Activated naive CD4-positive, alpha-beta T cell treated with anti-CD3 and anti-CD28 coated beads, Interleukin-2, amount 10 ng/mL, durations not matched to agents 7 days and 5 days (primary cell): ENCODE measurements at regions of chr9 and their contacts with region 1.

Region 1: DNA sequence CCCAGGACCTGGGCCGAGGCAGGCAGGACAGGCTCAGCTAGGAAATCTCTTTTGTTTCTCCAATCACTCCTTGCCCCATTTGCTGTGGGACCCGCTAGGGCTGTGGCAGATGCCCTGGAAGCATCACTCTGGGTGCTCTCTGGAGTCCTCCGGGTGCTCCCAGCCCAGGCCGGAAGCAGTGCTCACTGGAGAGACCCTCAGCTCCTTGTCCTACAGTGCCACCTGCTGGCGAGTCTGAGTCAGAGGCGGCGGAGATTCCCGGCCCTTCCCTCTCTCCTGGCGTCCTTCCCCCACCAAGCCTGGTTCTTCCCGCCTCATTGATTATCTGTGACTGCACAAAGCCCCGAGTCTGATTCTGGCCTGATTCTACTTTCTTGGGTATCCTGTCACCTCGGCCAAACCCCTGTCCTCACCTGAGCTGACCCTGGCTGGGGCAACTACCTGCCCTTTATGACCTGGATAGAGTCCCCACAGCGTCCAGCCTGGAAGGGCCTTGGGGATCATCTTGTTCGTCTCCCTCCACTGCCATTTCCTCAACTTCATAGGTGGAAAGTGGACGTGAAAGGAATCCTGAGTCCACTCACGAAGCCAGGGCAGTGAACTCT is 7.3 kb upstream of the BARHL1 start:
- DNase-seq: peak; percentile 75
- H3K4me3 Mint-ChIP-seq: no peak overlapping the region
- H3K27ac Mint-ChIP-seq: no peak overlapping the region
- H3K4me1 Mint-ChIP-seq: no peaks in the 10 kb centered on the region
- H3K27me3 Mint-ChIP-seq: peaks cover 71% of the 10 kb centered on the region

Region 2: GRCh38 chr9:132412089-132412488 is 163.0 kb before region 1 on chr9:
- CTCF ChIA-PET with region 1: interaction called, 57 read pairs
- DNase-seq: peak; percentile 44
- H3K4me3 Mint-ChIP-seq: no peak overlapping the region
- H3K27ac Mint-ChIP-seq: no peak overlapping the region
- H3K4me1 Mint-ChIP-seq: peaks cover 25% of the 10 kb centered on the region
- H3K27me3 Mint-ChIP-seq: peaks cover 93% of the 10 kb centered on the region

Region 3: DNA sequence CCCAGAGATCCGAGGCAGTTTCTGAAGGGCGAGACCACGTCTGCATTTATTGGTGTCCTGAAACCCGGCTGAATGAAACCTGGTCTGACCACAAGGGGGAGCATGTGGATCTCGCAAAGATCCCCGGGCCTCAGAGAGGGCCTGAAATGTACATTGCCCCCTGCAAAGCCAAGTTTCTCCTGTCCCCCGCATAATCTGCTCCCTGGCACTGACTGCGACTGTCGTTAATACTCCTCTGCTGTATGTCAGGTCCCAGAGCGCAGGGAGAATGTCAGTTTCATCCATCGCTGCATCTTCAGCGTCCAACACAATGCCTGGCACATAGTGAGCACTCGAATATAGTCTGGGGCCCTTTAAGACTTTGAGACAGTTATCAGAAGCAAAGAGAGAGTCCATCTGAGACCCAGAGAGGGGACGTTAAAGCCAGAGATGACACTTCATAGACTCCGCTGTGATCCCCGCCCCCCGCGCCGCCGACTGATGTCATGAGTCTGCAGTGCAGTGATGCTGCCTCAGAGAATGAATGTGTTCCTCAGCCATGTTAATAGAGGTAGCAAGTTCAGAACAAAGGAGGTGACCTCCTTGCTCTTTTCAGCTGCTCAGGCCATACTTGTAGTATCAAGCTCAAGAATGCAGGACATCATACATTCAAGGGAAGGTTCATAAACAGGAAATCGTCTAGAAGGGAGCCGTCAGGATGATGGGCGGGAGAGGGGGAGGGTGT is 67.2 kb before region 1 on chr9:
- CTCF ChIA-PET with region 1: interaction called, 15 read pairs
- DNase-seq: peak; percentile 78
- H3K4me3 Mint-ChIP-seq: no peak overlapping the region
- H3K27ac Mint-ChIP-seq: no peak overlapping the region
- H3K4me1 Mint-ChIP-seq: peaks cover 12% of the 10 kb centered on the region
- H3K27me3 Mint-ChIP-seq: peaks cover 43% of the 10 kb centered on the region